ENCODE measurements at regions of chr16 and their contacts with region 1.

Region 1: DNA sequence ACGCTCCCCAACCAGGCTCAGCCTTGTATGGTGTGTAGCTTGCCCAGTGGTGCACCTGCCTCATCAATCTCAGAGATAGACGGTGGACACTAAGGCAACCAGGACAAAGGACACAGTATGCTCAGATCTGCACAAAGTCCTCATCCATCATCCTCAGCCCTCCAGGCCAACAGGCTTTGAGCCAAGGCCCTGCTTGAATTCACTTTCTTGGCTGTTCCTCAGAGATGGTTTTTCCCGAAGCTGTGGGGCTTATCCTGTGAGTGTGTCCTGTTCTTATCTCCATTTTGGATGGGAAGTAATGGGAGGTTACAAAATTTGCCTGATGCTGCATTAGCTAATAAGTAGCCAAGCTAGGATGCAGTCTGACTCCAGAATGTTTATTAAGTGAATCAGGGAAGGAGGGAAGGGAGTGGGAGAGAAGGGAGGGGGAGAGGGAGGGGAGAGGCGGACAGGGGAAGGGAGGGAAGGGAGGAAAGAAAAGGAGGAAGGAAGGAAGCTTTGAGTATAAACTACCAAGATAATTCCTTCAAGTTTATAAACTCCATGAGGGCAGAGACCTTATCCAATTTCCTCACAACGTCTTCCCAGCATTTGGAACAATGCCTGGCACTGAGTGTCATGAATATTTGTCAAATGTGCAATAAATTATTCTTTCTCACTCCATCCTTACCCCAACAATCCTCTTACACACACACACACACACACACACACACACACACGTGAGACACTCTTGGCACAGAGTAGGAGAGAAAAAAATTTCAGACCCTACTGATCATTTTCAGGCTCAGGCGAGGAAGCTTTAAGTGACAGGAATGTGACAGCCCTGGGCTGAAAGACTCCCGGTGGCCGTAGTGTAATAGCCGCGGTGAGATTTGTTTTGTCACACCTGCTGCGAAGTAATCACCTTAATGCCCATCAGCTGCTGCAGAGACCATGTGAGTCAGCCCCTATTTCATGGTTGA is 84.3 kb downstream of the BMERB1 start:
- DNase-seq: peak; percentile 49 to 77
- ATAC-seq: peak; percentile 65 to 74
- H3K4me3 ChIP-seq: no peak overlapping the region
- H3K27ac ChIP-seq: peak overlapping the region; percentile 60 to 82 (median 77)
- H3K4me1 ChIP-seq: peaks cover 32% of the 10 kb centered on the region in 2 donors
- H3K27me3 ChIP-seq: no peaks in the 10 kb centered on the region
- CTCF ChIP-seq: no peak
- POLR2A ChIP-seq: no peak

Region 2: DNA sequence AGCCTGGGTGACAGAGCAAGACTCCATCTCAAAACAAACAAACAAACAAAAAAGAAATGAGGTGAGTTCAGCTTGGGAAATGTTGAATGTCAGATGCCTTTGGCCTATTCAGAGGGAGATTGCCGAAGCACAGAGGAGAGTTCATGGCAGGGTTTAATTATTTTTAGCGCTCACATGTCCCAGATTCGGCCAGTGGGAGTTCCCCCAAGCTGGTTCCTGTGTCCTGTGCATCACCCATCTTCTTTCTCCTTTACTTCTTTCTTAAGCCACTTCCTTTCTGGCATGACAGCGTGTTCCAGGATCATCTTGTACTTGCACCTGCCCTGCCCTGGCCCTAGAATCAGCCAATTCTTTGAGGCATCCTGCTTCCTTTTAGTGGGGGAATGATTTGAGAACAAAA is 113.9 kb before region 1 on chr16:
- in situ Hi-C with region 1: no loop called
- intact Hi-C with region 1: loop called (anchors 5 kb)
- DNase-seq: peak; percentile 92 to 94
- ATAC-seq: peak; percentile 92 to 94
- H3K4me3 ChIP-seq: no peak overlapping the region
- H3K27ac ChIP-seq: peak overlapping the region; percentile 95 to 97 (median 96)
- H3K4me1 ChIP-seq: peaks cover 17 to 34% of the 10 kb centered on the region in 2 donors
- H3K27me3 ChIP-seq: no peaks in the 10 kb centered on the region
- CTCF ChIP-seq: no peak
- POLR2A ChIP-seq: no peak

Region 3: GRCh38 chr16:15607700-15608396 is 89.2 kb after region 1 on chr16:
- in situ Hi-C with region 1: no loop called
- intact Hi-C with region 1: loop called (anchors 2 kb)
- DNase-seq: peak; percentile 94 to 97
- ATAC-seq: peak; percentile 87 to 91
- H3K4me3 ChIP-seq: no peak overlapping the region
- H3K27ac ChIP-seq: peak overlapping the region; percentile 81 to 92 (median 89)
- H3K4me1 ChIP-seq: peaks cover 53% of the 10 kb centered on the region in 2 donors
- H3K27me3 ChIP-seq: no peaks in the 10 kb centered on the region
- CTCF ChIP-seq: no peak
- POLR2A ChIP-seq: peak; percentile 40 to 67

Region 4: GRCh38 chr16:15650019-15650697 is 131.5 kb after region 1 on chr16 and contains the start of gene NDE1:
- in situ Hi-C with region 1: no loop called
- intact Hi-C with region 1: loop called (anchors 5 kb)
- DNase-seq: peak; percentile 88
- ATAC-seq: peak; percentile 97 to 98
- H3K4me3 ChIP-seq: peak within 1 kb of the TSS; percentile 69 to 98 (median 80)
- H3K27ac ChIP-seq: peak within 1 kb of the TSS; percentile 81 to 95 (median 85)
- H3K4me1 ChIP-seq: peaks cover 5 to 13% of the 10 kb centered on the region in 2 donors
- H3K27me3 ChIP-seq: no peaks in the 10 kb centered on the region
- CTCF ChIP-seq: peak in 1 of 5 experiments; percentile 18
- POLR2A ChIP-seq: peak; percentile 68 to 73
- total RNA-seq, gene NDE1: 4.0 to 26.2 (median 11.9) TPM

Region 5: DNA sequence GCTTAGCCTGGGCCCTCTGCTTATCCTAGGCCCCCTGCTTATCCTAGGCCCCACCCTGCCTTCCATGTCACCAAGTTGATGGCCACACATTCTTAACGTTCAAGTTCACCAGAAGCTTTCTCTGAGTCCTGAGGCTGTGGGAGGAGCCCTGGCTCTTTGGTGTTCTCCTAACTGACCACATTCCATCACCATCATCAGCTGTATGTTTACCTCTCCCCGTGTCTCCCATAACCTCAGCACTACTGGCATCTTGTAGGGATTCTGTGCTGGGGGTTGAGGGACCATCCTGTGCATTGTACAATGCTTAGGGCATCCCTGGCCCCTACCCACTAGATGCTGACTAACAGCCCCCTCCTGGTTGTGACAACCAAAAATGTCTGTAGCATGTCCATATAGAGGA is 230.7 kb after region 1 on chr16:
- in situ Hi-C with region 1: no loop called
- intact Hi-C with region 1: no loop called
- DNase-seq: no peak
- ATAC-seq: no peak
- H3K4me3 ChIP-seq: no peak overlapping the region
- H3K27ac ChIP-seq: no peak overlapping the region
- H3K4me1 ChIP-seq: no peaks in the 10 kb centered on the region
- H3K27me3 ChIP-seq: no peaks in the 10 kb centered on the region
- CTCF ChIP-seq: no peak
- POLR2A ChIP-seq: no peak

Measured in gastrocnemius medialis (tissue), 4 donors.